Activated naive CD4-positive, alpha-beta T cell treated with anti-CD3 and anti-CD28 coated beads for 36 hours (primary cell): ENCODE measurements at regions of chr1 and their contacts with region 1.

Region 1: GRCh38 chr1:113928941-113929749 is at the start of gene HIPK1:
- DNase-seq: peak; percentile 94
- H3K4me3 Mint-ChIP-seq: peak within 1 kb of the TSS; percentile 96
- H3K27ac Mint-ChIP-seq: peak within 1 kb of the TSS; percentile 99
- H3K4me1 Mint-ChIP-seq: peaks cover 40% of the 10 kb centered on the region
- H3K27me3 Mint-ChIP-seq: no peaks in the 10 kb centered on the region
- total RNA-seq, gene HIPK1: 47.7 to 51.0 TPM

Region 2: DNA sequence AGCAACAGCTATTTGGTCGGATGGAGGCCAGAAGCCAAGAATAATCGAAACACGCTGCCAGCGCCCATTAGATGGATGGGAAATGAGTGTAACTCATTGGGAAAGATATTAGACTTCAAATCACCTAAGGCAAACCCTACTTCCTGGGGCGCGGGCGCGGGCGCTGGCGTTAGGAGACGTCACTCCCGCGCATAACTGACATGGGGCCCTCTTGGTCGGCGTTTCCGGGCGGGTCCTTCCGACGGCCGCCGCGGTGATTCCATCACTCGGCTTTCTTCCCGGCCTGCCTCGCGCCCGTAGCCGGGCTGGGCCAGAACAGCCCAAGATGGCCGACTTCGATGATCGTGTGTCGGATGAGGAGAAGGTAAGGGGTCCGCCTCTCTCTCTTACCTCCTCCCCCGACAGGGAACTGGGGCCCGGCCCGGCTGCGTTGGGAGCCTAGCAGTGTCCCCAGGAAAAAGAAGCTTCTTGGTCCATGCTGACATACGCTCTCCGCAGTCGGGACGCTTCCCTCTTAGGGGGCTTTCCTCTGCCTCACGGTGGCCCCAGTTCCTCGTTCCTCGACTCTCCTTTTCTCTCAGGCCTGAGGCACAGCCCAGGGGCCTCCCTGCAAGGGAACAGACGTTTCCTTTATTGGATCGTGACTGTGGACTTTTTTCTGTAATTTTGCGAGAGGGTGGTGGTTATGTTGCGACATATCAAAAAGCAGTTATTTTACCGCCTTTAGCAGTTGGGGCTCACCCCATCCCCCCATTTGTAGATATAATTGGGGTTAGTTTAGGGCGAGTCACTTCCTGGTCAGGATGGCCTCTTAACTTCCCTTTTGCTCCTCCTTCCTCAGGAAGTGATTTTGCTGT is 1309.4 kb before region 1 on chr1 and contains the start of gene CAPZA1:
- CTCF ChIA-PET with region 1: no interaction called
- intact Hi-C with region 1: loop called (anchors 10 kb)
- DNase-seq: peak; percentile 95
- H3K4me3 Mint-ChIP-seq: peak within 1 kb of the TSS; percentile 99
- H3K27ac Mint-ChIP-seq: peak within 1 kb of the TSS; percentile 100
- H3K4me1 Mint-ChIP-seq: peaks cover 48% of the 10 kb centered on the region
- H3K27me3 Mint-ChIP-seq: no peaks in the 10 kb centered on the region
- total RNA-seq, gene CAPZA1: 231 to 242 TPM

Region 3: DNA sequence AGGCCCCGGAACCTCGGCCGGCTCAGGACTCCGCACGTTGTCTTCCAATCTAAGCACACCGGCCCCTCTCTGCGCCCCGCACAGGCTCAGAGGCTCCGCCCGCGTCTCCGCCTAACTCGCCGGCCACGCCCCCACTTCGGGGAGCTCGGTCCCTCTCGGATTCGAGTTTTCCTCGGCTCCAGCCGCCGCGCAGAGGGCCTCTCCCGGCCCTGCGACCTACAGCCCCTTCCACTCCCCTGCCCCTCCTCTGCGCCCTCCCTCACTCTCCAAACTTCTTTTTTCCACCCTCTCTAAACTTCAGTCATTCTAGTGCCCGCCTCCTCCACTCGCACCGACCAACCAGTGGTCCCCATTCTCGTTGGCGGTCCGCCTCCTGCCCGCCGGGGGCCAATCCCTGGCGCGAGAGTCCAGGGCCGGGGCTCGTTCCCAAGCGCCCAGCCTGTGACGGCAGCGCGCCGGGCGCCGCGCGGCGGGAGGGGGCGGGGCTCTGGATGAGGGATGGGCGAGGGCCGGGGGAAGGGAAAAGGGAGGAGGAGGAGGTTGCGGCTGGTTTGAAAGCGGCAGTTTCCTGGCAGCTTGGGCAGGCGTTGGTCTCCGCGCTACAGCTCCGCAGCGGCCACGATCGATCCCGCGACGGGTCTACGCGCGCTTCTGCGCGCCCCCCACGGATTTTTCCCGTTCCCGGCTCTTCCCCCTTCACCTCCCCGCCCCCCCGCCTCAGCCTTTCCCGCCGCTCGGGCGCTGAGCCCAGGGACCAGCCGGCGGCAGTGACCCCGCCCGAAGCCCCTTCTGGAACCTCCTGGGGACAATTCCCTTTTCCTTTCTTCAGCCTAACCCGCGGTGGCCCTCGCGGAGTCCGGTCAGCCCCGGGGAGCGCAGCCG is 539.0 kb before region 1 on chr1 and contains the start of gene MAGI3:
- CTCF ChIA-PET with region 1: no interaction called
- intact Hi-C with region 1: loop called (anchors 1 kb)
- DNase-seq: peak; percentile 97
- H3K4me3 Mint-ChIP-seq: peak within 1 kb of the TSS; percentile 83
- H3K27ac Mint-ChIP-seq: peak within 1 kb of the TSS; percentile 48
- H3K4me1 Mint-ChIP-seq: peaks cover 20% of the 10 kb centered on the region
- H3K27me3 Mint-ChIP-seq: no peaks in the 10 kb centered on the region
- total RNA-seq, gene MAGI3: 5.9 to 6.4 TPM

Region 4: GRCh38 chr1:113479713-113480676 is 449.1 kb before region 1 on chr1:
- CTCF ChIA-PET with region 1: no interaction called
- intact Hi-C with region 1: no loop called
- DNase-seq: no peak
- H3K4me3 Mint-ChIP-seq: no peak overlapping the region
- H3K27ac Mint-ChIP-seq: no peak overlapping the region
- H3K4me1 Mint-ChIP-seq: no peaks in the 10 kb centered on the region
- H3K27me3 Mint-ChIP-seq: no peaks in the 10 kb centered on the region

Region 5: GRCh38 chr1:113811888-113812660 is 117.1 kb before region 1 on chr1 and contains the start of gene RSBN1:
- CTCF ChIA-PET with region 1: no interaction called
- intact Hi-C with region 1: loop called (anchors 1 kb)
- DNase-seq: peak; percentile 99
- H3K4me3 Mint-ChIP-seq: peak within 1 kb of the TSS; percentile 98
- H3K27ac Mint-ChIP-seq: peak within 1 kb of the TSS; percentile 94
- H3K4me1 Mint-ChIP-seq: peaks cover 31% of the 10 kb centered on the region
- H3K27me3 Mint-ChIP-seq: no peaks in the 10 kb centered on the region
- total RNA-seq, gene RSBN1: 13.6 to 14.3 TPM

Region 6: GRCh38 chr1:113904674-113905434 is 24.3 kb before region 1 on chr1 and contains the starts of genes AP4B1 and DCLRE1B:
- CTCF ChIA-PET with region 1: interaction called, 43 read pairs
- intact Hi-C with region 1: loop called (anchors 1 kb)
- DNase-seq: peak; percentile 99
- H3K4me3 Mint-ChIP-seq: peak within 1 kb of the TSS; percentile 99
- H3K27ac Mint-ChIP-seq: peak within 1 kb of the TSS; percentile 97
- H3K4me1 Mint-ChIP-seq: peaks cover 51% of the 10 kb centered on the region
- H3K27me3 Mint-ChIP-seq: no peaks in the 10 kb centered on the region
- total RNA-seq, gene AP4B1: 35.7 to 40.2 TPM
- total RNA-seq, gene DCLRE1B: 17.7 to 18.3 TPM

Region 7: GRCh38 chr1:114181350-114181749 is 252.2 kb after region 1 on chr1:
- CTCF ChIA-PET with region 1: no interaction called
- intact Hi-C with region 1: no loop called
- DNase-seq: no peak
- H3K4me3 Mint-ChIP-seq: no peak overlapping the region
- H3K27ac Mint-ChIP-seq: no peak overlapping the region
- H3K4me1 Mint-ChIP-seq: no peaks in the 10 kb centered on the region
- H3K27me3 Mint-ChIP-seq: no peaks in the 10 kb centered on the region

Region 8: DNA sequence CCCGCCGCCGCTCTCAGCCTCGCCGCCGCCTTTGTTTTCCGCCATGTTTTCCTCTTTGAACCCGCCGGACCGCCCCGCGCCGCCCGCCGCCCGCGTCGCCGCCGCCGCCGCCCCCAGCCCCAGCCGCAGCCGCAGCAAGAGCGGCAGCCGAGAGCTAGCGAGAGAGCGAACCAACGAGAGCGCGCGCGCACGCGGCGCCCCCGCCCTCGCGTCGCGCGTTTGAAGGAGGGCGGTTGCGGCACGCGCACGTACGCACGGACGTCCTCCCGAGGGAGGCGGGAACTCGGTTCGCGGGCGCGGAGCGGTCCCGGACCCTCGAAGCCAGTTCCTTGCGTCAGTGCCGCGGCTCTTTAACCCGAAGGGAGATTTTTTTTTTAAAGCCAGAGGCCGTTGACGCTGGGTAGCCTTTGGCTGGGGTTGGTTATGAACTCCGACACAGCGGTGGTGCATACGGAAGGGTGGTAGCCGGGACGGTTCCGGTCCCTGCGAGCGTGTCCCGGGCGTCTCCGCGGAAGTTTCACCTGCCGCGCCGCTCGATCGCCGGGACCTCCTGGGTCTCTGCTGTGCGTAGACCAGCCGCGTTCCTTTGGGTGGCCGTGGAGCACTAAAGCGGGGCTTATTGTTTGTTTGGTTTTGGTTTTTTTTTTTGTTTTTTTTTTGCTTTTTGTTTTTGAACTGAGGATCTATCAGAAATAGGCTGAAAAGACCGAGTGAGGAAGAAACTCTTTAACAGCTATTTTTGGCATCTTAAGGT is 582.1 kb after region 1 on chr1 and contains the start of gene TRIM33:
- CTCF ChIA-PET with region 1: no interaction called
- intact Hi-C with region 1: loop called (anchors 5 kb)
- DNase-seq: peak; percentile 92
- H3K4me3 Mint-ChIP-seq: peak within 1 kb of the TSS; percentile 90
- H3K27ac Mint-ChIP-seq: peak within 1 kb of the TSS; percentile 99
- H3K4me1 Mint-ChIP-seq: peaks cover 48% of the 10 kb centered on the region
- H3K27me3 Mint-ChIP-seq: no peaks in the 10 kb centered on the region
- total RNA-seq, gene TRIM33: 23.1 to 25.0 TPM

Region 9: GRCh38 chr1:114558544-114558943 is 629.4 kb after region 1 on chr1:
- CTCF ChIA-PET with region 1: no interaction called
- intact Hi-C with region 1: no loop called
- DNase-seq: no peak
- H3K4me3 Mint-ChIP-seq: no peak overlapping the region
- H3K27ac Mint-ChIP-seq: no peak overlapping the region
- H3K4me1 Mint-ChIP-seq: no peaks in the 10 kb centered on the region
- H3K27me3 Mint-ChIP-seq: no peaks in the 10 kb centered on the region